ENCODE measurements at regions of chr9 and their contacts with region 1.

Region 1: GRCh38 chr9:112361601-112362000 is 18.3 kb upstream of the HSDL2 start:
- DNase-seq: no peak
- ATAC-seq: peak in 1 of 4 donors; percentile 60
- H3K4me3 ChIP-seq: no peak overlapping the region
- H3K27ac ChIP-seq: no peak overlapping the region
- H3K4me1 ChIP-seq: no peaks in the 10 kb centered on the region
- H3K27me3 ChIP-seq: no peaks in the 10 kb centered on the region
- CTCF ChIP-seq: peak; percentile 44 to 73 (median 65)
- POLR2A ChIP-seq: no peak

Region 2: DNA sequence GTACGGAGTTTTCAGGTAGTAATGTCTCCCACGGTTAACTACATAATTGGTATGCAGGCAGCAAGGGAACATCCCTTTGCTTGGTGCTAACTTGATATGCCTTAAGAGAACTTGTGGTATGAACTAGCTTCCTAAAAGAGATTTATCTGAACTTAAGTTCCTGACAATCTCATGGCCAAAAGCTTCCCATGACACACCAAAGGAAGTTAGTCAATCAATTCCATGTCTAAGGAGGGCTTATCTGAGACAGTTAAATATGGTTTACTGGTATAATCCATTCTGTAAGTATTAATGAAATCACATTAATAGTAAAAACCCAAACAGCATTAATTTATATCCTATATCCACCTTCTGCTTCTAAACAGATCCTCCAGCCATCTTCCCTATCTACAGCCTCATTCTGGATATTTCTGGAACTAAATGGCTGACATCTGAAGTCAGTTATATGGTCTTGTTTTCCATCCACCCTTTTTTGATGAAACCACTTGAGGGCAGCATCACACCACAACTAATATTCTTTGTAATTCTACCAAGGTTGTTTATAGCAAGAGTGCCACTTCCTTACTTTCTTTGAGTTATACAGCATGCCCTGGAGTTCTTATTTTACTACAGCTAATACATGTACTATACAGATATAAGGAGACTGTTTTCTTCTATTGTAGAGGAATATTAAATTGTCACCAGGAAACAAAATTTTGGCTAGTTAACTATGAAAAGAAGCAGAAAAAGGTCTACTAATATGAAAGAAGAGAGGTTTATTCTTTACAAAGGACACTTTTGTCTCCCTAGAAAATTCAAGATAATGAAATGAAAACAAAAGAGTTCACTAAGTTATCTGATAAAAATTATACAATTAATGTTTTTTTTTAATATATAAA is 601.6 kb before region 1 on chr9:
- intact Hi-C with region 1: loop called in 8 of 10 experiments (anchors 2 to 10 kb)
- DNase-seq: peak in 2 of 5 donors; percentile 48 to 50
- ATAC-seq: peak in 3 of 4 donors; percentile 88 to 91 (median 90)
- H3K4me3 ChIP-seq: no peak overlapping the region
- H3K27ac ChIP-seq: peak overlapping the region in 1 of 12 donors; percentile 39
- H3K4me1 ChIP-seq: peaks cover 0 to 8% (median 0%) of the 10 kb centered on the region in 12 donors
- H3K27me3 ChIP-seq: no peaks in the 10 kb centered on the region
- CTCF ChIP-seq: peak; percentile 53 to 81 (median 72)
- POLR2A ChIP-seq: no peak

Region 3: DNA sequence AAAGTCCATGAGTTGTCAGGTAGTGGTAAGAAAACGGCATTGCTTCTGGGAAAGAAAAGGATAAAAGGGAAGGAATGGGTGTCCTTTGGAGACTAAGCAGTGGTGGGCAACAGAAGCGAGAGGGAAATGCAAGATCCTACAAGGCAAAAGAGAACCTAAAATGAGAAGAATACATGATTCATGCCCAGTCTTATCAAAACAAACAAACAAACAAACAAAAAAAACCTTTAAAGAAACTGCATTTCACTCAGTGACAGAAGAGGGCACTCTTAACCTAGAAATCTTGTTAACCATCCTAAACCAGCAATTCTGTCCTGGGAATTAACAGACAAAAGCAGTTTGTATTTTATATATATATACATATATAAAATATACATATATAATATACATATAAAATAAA is 275.0 kb before region 1 on chr9:
- intact Hi-C with region 1: loop called in 8 of 10 experiments (anchors 2 to 5 kb)
- DNase-seq: no peak
- ATAC-seq: no peak
- H3K4me3 ChIP-seq: no peak overlapping the region
- H3K27ac ChIP-seq: no peak overlapping the region
- H3K4me1 ChIP-seq: peaks cover 0 to 1% (median 0%) of the 10 kb centered on the region in 12 donors
- H3K27me3 ChIP-seq: no peaks in the 10 kb centered on the region
- CTCF ChIP-seq: peak in 11 of 12 donors; percentile 37 to 70 (median 64)
- POLR2A ChIP-seq: no peak

Region 4: DNA sequence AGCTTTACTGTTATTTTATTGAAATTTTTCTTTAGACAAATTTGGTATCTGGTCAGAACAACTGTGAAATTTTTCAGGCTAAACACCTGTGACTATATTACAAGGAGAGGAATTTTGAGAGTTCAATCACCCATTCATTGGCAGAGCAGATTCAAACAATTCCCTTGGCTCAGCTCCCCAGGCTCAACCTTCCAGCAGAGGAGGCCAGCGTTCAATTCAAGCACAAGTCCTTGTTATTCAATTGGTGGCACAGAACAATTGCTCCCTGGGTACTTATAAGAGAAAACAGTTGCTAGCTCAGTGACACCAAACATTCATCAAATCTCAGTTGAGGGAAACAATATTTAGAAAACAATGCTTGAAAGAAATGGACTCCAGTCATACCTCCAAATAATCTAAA is 269.8 kb before region 1 on chr9:
- intact Hi-C with region 1: loop called (anchors 2 to 5 kb)
- DNase-seq: no peak
- ATAC-seq: peak in 2 of 4 donors; percentile 42 to 46
- H3K4me3 ChIP-seq: no peak overlapping the region
- H3K27ac ChIP-seq: no peak overlapping the region
- H3K4me1 ChIP-seq: peaks cover 0 to 27% (median 0%) of the 10 kb centered on the region in 12 donors
- H3K27me3 ChIP-seq: no peaks in the 10 kb centered on the region
- CTCF ChIP-seq: peak in 9 of 12 donors; percentile 18 to 48 (median 35)
- POLR2A ChIP-seq: no peak

Region 5: DNA sequence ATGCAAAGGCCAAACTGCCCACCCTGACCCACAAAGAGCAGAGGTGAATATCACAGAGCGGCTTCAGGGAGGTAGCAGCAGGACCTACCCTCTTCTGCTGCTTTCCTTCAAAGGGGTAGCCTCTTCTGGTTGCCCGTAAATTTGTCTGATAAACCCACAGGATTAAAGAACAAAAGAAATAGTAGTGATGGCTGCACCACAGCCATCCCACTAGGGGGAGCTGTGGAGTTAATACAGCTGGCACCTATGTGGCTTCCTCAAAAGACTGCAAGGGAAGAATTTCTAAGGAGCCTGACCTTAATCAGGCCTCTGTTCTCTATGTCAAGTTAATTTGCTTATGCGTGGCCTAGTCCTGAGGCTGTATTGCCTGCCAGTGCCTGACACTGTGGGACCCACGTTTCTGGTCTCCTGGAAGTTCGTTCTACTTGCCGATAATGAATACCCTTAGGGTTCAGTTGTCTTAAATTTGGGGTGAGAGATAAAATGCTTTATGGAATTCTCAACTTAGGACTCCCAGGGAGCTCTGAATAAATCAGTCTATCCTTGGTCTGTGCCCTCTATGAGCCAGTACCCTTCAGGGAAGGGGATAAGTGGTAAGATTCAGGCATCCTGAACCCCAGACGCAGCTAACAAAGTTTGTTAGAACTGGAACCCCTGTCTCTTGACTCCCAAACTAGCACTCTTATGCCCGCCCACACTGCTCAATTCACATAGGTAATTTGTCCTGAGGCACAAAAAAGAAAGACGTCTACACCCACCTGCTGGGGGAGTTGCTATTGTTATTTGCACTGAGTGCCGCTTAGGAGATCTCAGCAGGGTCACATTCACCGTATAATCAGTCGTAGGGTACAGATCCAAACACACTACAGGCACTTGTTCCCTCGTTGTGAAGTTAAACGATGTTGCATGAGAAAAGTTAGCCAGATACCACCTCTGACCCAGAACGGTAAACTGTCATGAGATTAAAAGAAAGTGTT is 263.6 kb before region 1 on chr9:
- intact Hi-C with region 1: loop called in 4 of 10 experiments (anchors 2 to 5 kb)
- DNase-seq: peak in 4 of 5 donors; percentile 47 to 68 (median 54)
- ATAC-seq: peak; percentile 42 to 86 (median 82)
- H3K4me3 ChIP-seq: no peak overlapping the region
- H3K27ac ChIP-seq: no peak overlapping the region
- H3K4me1 ChIP-seq: peaks cover 0 to 53% (median 0%) of the 10 kb centered on the region in 12 donors
- H3K27me3 ChIP-seq: no peaks in the 10 kb centered on the region
- CTCF ChIP-seq: peak; percentile 79 to 95 (median 90)
- POLR2A ChIP-seq: no peak

Measured in heart left ventricle (tissue), 16 donors.